Mammary epithelial cell (primary cell): ENCODE measurements at regions of chr9 and their contacts with region 1.

Region 1: DNA sequence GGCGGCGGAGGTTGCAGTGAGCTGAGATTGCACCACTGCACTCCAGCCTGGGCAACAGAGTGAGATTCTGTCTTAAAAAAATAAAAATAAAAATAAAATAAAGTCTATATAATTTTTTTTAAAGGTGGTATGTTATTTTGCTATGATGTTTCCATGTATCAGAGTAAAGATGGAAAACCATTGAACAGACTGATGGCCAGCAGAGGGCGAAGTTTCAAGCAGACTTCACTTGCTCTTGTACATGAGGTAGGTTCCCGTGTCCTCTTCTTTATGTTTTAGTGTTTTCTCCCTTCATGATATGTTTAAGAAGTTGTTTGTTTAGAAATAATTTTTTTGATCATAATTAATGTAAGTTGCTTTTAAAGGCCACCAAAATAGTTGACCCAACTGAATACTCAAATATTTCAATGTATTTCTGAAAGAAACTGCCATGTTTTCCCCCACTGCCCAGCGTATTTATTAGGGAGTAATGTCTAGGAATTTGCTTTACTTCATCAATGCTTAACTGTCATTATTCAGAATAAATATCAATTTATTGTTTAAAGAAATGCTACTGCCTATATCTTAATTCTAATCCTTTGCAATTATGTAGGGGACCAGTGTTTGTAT is 146.4 kb downstream of the HACD4 start:
- DNase-seq: peak; percentile 37
- H3K4me3 ChIP-seq: no peak overlapping the region
- H3K27ac ChIP-seq: no peak overlapping the region
- H3K4me1 ChIP-seq: no peaks in the 10 kb centered on the region
- H3K27me3 ChIP-seq: no peaks in the 10 kb centered on the region
- CTCF ChIP-seq: peak; percentile 57 to 73

Region 2: DNA sequence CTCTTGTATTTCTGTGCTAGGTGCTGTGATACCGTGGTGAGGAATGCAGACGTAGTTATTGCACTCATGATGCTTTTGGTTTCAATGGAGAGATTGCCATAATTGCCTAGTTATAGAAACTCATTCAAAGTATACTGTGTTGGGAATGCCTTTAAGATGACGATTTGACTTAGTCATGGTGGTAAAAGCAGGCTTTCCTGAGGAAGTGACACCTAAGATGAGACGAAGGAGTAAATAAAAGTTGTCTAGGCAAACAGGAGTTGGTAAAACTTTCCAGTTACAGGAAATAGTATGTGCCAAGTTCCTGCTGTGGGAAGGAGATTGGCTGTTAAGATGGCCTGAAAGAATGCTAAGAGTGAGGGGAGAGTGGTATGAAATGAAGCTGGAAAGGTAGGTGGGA is 153.0 kb before region 1 on chr9:
- CTCF ChIA-PET with region 1: no interaction called
- dilution Hi-C with region 1: no loop called
- in situ Hi-C with region 1: no loop called
- intact Hi-C with region 1: no loop called
- DNase-seq: peak; percentile 81
- H3K4me3 ChIP-seq: no peak overlapping the region
- H3K27ac ChIP-seq: no peak overlapping the region
- H3K4me1 ChIP-seq: no peaks in the 10 kb centered on the region
- H3K27me3 ChIP-seq: no peaks in the 10 kb centered on the region
- CTCF ChIP-seq: no peak

Region 3: GRCh38 chr9:20930836-20931235 is 45.7 kb after region 1 on chr9:
- CTCF ChIA-PET with region 1: no interaction called
- dilution Hi-C with region 1: no loop called
- in situ Hi-C with region 1: loop called in 1 of 2 experiments (anchors 5 kb)
- intact Hi-C with region 1: no loop called
- DNase-seq: no peak
- H3K4me3 ChIP-seq: no peak overlapping the region
- H3K27ac ChIP-seq: no peak overlapping the region
- H3K4me1 ChIP-seq: no peaks in the 10 kb centered on the region
- H3K27me3 ChIP-seq: no peaks in the 10 kb centered on the region
- CTCF ChIP-seq: no peak